PC-3 (cell line): ENCODE measurements at regions of chr11 and their contacts with region 1.

Region 1: GRCh38 chr11:110195845-110196754 is 100.3 kb downstream of the RDX start:
- DNase-seq: peak; percentile 97
- ATAC-seq: peak; percentile 77
- H3K4me3 ChIP-seq: no peak overlapping the region; the same call in 1 of the 2 replicates
- H3K27ac ChIP-seq: peak overlapping the region; percentile 92
- H3K4me1 ChIP-seq: peaks cover 75% of the 10 kb centered on the region
- H3K27me3 ChIP-seq: no peaks in the 10 kb centered on the region
- CTCF ChIP-seq: no peak

Region 2: GRCh38 chr11:109378034-109378433 is 818.1 kb before region 1 on chr11:
- CTCF ChIA-PET with region 1: no interaction called
- POLR2A ChIA-PET with region 1: no interaction called
- intact Hi-C with region 1: no loop called
- DNase-seq: no peak
- ATAC-seq: no peak
- H3K4me3 ChIP-seq: no peak overlapping the region
- H3K27ac ChIP-seq: no peak overlapping the region
- H3K4me1 ChIP-seq: no peaks in the 10 kb centered on the region
- H3K27me3 ChIP-seq: peaks cover 42% of the 10 kb centered on the region
- CTCF ChIP-seq: no peak

Region 3: DNA sequence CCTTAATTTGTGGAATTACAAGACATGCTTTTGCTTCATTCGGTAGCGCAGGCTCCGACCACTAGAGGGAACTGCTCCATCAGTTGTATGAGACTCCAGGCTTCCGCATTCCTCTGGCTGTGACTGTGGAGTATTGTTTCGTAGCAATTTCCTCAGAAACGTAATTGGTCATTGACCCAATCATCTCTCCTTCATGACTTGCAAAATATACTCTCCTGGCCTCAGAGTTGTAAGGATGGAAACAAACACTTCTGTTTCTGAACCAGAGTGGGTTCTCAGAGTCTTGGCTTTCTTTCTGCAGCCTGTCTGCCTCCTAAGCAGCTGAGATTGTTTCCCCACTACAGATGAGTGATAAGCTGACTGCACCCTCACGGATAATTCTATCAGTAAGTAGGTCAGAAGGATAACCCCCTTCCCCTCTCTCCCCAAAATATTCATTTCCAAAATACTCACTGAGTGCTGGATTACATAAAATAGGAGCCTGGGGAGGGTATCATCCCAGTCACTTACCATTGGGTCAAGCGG is 249.7 kb before region 1 on chr11:
- CTCF ChIA-PET with region 1: no interaction called
- POLR2A ChIA-PET with region 1: no interaction called
- intact Hi-C with region 1: loop called (anchors 1 kb)
- DNase-seq: peak; percentile 98
- ATAC-seq: peak; percentile 95
- H3K4me3 ChIP-seq: peak overlapping the region; percentile 53; the same call in 1 of the 2 replicates
- H3K27ac ChIP-seq: peak overlapping the region; percentile 80
- H3K4me1 ChIP-seq: peaks cover 20% of the 10 kb centered on the region
- H3K27me3 ChIP-seq: no peaks in the 10 kb centered on the region
- CTCF ChIP-seq: peak; percentile 99

Region 4: DNA sequence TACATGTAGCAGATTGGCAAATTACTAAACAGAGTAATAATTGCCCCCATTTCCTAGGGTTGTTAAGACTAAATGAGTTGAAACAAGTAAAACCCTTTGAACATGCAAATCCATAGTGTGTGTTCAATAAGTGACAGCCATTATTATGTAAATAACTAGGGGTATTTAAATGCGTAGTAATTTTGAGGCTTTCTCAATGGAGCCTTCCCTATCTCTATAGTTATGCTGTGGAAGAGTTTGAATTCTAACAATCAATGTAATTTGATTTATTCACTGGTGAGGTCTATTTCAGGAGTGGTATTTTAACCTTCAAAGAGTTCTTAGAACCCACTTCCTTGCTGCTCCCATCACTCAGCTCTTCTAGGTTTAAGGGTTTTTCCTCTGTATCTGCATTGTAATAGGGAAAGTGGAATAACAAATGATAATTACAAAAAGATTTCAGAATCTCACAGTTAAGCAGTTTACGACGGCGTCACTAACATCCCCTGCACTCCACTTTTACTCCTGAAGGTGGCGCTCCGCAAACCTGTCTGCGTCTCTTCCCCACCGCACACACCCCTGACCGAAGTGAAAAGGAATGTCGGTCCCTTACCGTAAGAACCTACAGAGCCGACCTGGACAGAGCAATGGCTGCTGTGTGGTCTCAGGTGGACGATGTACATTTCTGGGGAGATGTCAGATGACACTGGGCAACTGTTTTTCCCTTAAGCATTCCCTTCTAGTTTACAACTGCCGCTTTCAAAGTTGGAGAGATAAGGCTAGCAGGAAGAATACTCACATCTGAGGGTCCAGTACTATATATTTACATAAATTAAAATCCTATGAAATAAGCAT is 22.1 kb before region 1 on chr11:
- CTCF ChIA-PET with region 1: no interaction called
- POLR2A ChIA-PET with region 1: no interaction called
- intact Hi-C with region 1: no loop called
- DNase-seq: peak; percentile 37
- ATAC-seq: no peak
- H3K4me3 ChIP-seq: no peak overlapping the region
- H3K27ac ChIP-seq: no peak overlapping the region
- H3K4me1 ChIP-seq: no peaks in the 10 kb centered on the region
- H3K27me3 ChIP-seq: no peaks in the 10 kb centered on the region
- CTCF ChIP-seq: peak; percentile 86

Region 5: DNA sequence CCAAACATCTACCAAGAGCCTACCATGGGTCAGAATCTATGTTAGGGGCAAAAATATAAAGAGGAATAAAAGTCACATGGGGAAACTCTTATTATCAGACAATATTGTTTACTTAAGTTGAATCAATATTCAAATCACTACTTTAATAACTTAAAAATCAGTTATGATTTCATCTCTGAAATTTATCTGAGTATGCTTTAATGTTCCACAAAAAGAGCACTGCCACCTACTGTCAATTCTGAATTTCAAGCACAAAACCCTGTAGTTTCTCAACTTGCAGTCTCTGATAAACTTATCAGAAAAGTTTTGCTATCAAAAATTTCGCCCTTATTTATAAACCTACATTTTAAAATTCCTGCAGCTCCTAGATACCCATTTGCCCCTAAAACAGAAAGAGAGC is 53.0 kb after region 1 on chr11:
- CTCF ChIA-PET with region 1: no interaction called
- POLR2A ChIA-PET with region 1: no interaction called
- intact Hi-C with region 1: loop called (anchors 1 kb)
- DNase-seq: peak; percentile 35
- ATAC-seq: no peak
- H3K4me3 ChIP-seq: no peak overlapping the region
- H3K27ac ChIP-seq: no peak overlapping the region
- H3K4me1 ChIP-seq: peaks cover 19% of the 10 kb centered on the region
- H3K27me3 ChIP-seq: no peaks in the 10 kb centered on the region
- CTCF ChIP-seq: peak; percentile 71

Region 6: DNA sequence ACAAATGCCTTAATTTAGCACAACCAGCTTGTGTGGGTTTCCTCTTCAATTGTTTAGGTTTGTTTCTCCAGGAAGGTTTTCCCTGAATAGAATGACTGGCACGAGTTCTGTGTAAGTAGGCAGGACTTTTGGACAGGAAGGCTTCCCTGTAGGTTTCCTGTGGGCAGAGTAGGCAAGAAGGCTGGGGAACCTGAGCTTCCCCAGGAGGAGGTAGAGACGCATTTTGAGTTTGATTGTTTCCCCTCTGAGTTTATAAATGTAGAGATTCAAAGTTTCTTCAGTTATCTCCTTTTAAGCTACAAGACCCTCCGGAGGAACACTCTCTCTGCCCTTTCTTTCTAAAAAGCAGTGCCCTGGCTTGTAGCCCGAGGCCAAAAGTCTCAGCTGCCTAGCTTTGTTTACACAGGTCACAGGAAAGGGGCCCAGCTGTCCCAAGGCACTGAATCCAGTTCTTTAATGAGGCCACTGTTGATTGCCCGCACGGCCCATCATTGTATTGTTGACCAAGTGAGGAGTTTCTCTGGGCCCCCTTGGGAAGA is 166.9 kb after region 1 on chr11:
- CTCF ChIA-PET with region 1: interaction called, 30 read pairs
- POLR2A ChIA-PET with region 1: no interaction called
- intact Hi-C with region 1: loop called (anchors 1 kb)
- DNase-seq: peak; percentile 72
- ATAC-seq: peak; percentile 94
- H3K4me3 ChIP-seq: peak overlapping the region; percentile 46
- H3K27ac ChIP-seq: peak overlapping the region; percentile 70
- H3K4me1 ChIP-seq: peaks cover 27% of the 10 kb centered on the region
- H3K27me3 ChIP-seq: no peaks in the 10 kb centered on the region
- CTCF ChIP-seq: no peak

Region 7: GRCh38 chr11:110429731-110430266 is 233.7 kb after region 1 on chr11 and contains the start of gene FDX1:
- CTCF ChIA-PET with region 1: interaction called, 10 read pairs
- POLR2A ChIA-PET with region 1: no interaction called
- intact Hi-C with region 1: loop called (anchors 1 kb)
- DNase-seq: peak; percentile 81
- ATAC-seq: peak; percentile 84
- H3K4me3 ChIP-seq: peak within 1 kb of the TSS; percentile 78
- H3K27ac ChIP-seq: peak within 1 kb of the TSS; percentile 40
- H3K4me1 ChIP-seq: peaks cover 27% of the 10 kb centered on the region
- H3K27me3 ChIP-seq: no peaks in the 10 kb centered on the region
- CTCF ChIP-seq: peak; percentile 48; the same call in 1 of the 2 replicates
- total RNA-seq, gene FDX1: 14.8 and 16.6 TPM in 2 replicates